HepG2 (cell line): ENCODE measurements at regions of chr20 and their contacts with region 1.

Region 1: GRCh38 chr20:40689943-40690835 is 1.2 kb upstream of the MAFB start:
- DNase-seq: peak; percentile 85
- ATAC-seq: peak; percentile 78
- H3K4me3 ChIP-seq: peak overlapping the region; percentile 41 to 75 (median 50)
- H3K27ac ChIP-seq: no peak overlapping the region
- H3K4me1 ChIP-seq: peaks cover 13% of the 10 kb centered on the region; the same call in 1 of the 2 replicates
- H3K27me3 ChIP-seq: peaks cover 11 to 50% of the 10 kb centered on the region in 2 experiments
- CTCF ChIP-seq: peak; percentile 98
- EP300 ChIP-seq: peak in 1 of 2 experiments; percentile 31; a peak in 1 of 4 replicates
- POLR2A ChIP-seq: no peak
- RAD21 ChIP-seq: peak; percentile 99

Region 2: GRCh38 chr20:39112178-39112743 is 1577.9 kb before region 1 on chr20:
- CTCF ChIA-PET with region 1: interaction called, 8 read pairs
- POLR2A ChIA-PET with region 1: no interaction called
- in situ Hi-C with region 1: loop called (anchors 10 kb)
- intact Hi-C with region 1: loop called (anchors 10 kb)
- DNase-seq: peak; percentile 65
- ATAC-seq: peak; percentile 97
- H3K4me3 ChIP-seq: peak overlapping the region in 1 of 3 experiments; percentile 6; a peak in 1 of 6 replicates
- H3K27ac ChIP-seq: no peak overlapping the region
- H3K4me1 ChIP-seq: peaks cover 15% of the 10 kb centered on the region; the same call in 1 of the 2 replicates
- H3K27me3 ChIP-seq: peaks cover 4 to 23% of the 10 kb centered on the region in 2 experiments; a peak in 3 of 5 replicates
- CTCF ChIP-seq: peak; percentile 96
- EP300 ChIP-seq: no peak
- POLR2A ChIP-seq: no peak
- RAD21 ChIP-seq: peak; percentile 90

Region 3: DNA sequence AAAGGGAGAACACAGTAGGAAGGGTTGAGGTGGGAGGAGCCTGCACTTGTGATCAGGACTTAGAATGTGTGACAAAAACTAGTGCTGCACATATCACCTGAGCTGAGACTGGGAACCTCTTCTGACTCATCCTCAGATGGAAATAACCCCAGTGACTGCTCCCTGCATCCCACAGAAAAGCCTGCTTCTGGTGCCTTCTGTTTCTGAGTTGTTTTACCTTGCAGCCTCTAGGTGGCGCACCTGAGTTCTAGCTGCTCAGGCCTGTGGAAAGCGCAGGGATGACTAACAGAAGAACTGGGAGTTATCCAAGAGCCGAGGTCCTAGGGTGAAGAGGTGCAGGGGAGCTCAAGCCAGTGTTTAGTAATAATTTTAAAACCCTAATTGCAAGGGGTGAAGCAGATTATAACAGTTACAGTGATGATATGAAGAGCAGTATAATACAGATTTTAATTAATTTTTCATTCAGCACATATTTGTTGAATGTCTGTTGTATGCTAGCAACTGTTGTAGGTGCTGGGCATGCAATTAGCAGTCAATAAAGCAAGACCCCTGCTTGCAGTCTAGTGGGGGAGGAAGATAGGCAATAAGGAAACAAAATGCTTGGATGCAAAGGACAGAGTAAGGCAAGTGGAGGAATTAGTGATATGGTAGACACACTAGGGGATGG is 1425.5 kb before region 1 on chr20:
- CTCF ChIA-PET with region 1: interaction called, 4 read pairs
- POLR2A ChIA-PET with region 1: no interaction called
- in situ Hi-C with region 1: no loop called
- intact Hi-C with region 1: loop called (anchors 10 kb)
- DNase-seq: peak; percentile 63
- ATAC-seq: peak; percentile 84
- H3K4me3 ChIP-seq: no peak overlapping the region
- H3K27ac ChIP-seq: no peak overlapping the region
- H3K4me1 ChIP-seq: no peaks in the 10 kb centered on the region
- H3K27me3 ChIP-seq: peaks cover 0 to 2% of the 10 kb centered on the region in 2 experiments; a peak in 1 of 5 replicates
- CTCF ChIP-seq: peak; percentile 87
- EP300 ChIP-seq: no peak
- POLR2A ChIP-seq: no peak
- RAD21 ChIP-seq: 0 out of 2 replicates have a peak, but pooled peaks have one; percentile 14

Region 4: GRCh38 chr20:39270837-39271604 is 1419.2 kb before region 1 on chr20:
- CTCF ChIA-PET with region 1: interaction called, 4 read pairs
- POLR2A ChIA-PET with region 1: no interaction called
- in situ Hi-C with region 1: loop called (anchors 10 kb)
- intact Hi-C with region 1: loop called (anchors 10 kb)
- DNase-seq: no peak
- ATAC-seq: no peak
- H3K4me3 ChIP-seq: no peak overlapping the region
- H3K27ac ChIP-seq: no peak overlapping the region
- H3K4me1 ChIP-seq: no peaks in the 10 kb centered on the region
- H3K27me3 ChIP-seq: peaks cover 0 to 9% of the 10 kb centered on the region in 2 experiments; a peak in 1 of 5 replicates
- CTCF ChIP-seq: no peak
- EP300 ChIP-seq: no peak
- POLR2A ChIP-seq: no peak
- RAD21 ChIP-seq: no peak

Region 5: DNA sequence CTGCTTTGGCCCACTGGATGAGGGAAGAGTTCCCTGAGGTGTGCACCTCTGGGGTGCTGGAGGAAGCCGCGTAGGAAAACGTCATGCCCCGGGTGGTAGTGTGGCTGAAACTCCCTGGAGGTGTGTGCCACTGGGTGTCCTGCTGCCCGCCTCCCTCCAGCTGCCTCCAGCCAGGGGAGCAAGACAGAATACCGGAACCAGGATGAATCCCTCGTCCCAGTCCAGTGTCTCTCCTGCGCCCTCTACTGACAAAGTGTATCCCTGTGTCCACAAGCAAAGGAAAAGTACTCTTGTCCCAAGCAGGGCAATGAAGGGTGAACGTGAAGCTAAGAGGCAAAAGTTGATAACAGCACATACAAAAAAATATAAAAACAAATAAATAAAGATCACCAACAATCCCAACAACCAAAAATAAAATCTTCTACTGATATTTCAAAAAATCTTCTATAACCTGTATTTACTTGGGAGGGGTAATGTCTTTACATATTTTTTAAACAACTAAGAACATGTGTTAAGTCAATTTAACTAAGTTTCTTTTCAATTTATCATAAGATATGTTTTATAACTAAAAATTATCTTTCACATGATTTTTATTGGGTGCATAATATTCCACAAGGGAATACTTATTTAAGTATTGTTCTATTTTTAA is 438.8 kb before region 1 on chr20:
- CTCF ChIA-PET with region 1: no interaction called
- POLR2A ChIA-PET with region 1: no interaction called
- in situ Hi-C with region 1: no loop called
- intact Hi-C with region 1: loop called (anchors 1 kb)
- DNase-seq: peak; percentile 70
- ATAC-seq: peak; percentile 96
- H3K4me3 ChIP-seq: no peak overlapping the region
- H3K27ac ChIP-seq: no peak overlapping the region
- H3K4me1 ChIP-seq: no peaks in the 10 kb centered on the region
- H3K27me3 ChIP-seq: no peaks in the 10 kb centered on the region
- CTCF ChIP-seq: peak; percentile 87
- EP300 ChIP-seq: no peak
- POLR2A ChIP-seq: no peak
- RAD21 ChIP-seq: peak; percentile 49

Region 6: GRCh38 chr20:40265825-40266533 is 424.2 kb before region 1 on chr20:
- CTCF ChIA-PET with region 1: interaction called, 22 read pairs
- POLR2A ChIA-PET with region 1: no interaction called
- in situ Hi-C with region 1: loop called (anchors 5 kb)
- intact Hi-C with region 1: loop called (anchors 1 kb)
- DNase-seq: peak; percentile 35
- ATAC-seq: peak; percentile 85
- H3K4me3 ChIP-seq: no peak overlapping the region
- H3K27ac ChIP-seq: no peak overlapping the region
- H3K4me1 ChIP-seq: no peaks in the 10 kb centered on the region
- H3K27me3 ChIP-seq: no peaks in the 10 kb centered on the region
- CTCF ChIP-seq: peak; percentile 56
- EP300 ChIP-seq: no peak
- POLR2A ChIP-seq: no peak
- RAD21 ChIP-seq: no peak; the same call in 1 of the 2 replicates

Region 7: DNA sequence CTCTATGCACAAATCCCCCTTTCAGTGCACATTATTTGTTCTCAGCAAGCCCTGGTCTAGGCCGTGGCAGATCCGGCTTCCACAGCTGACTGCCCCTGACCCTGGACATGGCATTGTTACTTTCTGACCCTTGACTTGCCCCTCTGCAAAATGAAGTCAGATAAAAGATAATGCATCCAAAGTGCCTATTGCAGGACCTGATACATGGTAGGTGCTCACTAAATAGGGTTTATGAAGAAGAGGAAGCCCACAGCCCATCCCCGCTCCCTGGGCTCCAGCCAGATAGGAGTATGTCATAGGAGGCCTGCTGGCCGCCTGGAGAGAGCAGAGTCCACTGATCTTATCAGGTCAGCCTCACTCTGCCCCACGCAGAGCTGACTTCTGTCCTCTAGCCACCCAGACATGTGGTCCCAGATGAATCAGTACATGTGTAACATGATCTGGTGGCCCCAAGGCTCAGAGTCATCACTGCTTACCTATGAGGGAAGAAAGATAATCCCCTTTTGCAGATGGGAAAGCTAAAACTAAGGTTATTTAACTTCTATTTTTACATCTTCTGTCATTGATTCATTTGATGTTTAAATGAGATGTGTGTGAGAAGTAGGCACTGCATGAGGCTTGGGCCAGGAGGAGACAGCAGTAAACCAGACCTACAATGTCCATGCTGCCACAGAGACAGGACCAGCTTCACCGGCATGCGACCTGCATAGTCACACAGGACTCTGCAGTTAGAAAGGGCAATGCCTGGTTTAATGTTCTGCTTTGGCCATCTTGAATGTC is 21.6 kb before region 1 on chr20:
- CTCF ChIA-PET with region 1: no interaction called
- POLR2A ChIA-PET with region 1: interaction called, 12 read pairs
- in situ Hi-C with region 1: no loop called
- intact Hi-C with region 1: loop called (anchors 1 kb)
- DNase-seq: peak; percentile 96
- ATAC-seq: peak; percentile 99
- H3K4me3 ChIP-seq: peak overlapping the region in 1 of 3 experiments; percentile 21; a peak in 2 of 6 replicates
- H3K27ac ChIP-seq: peak overlapping the region; percentile 15
- H3K4me1 ChIP-seq: peaks cover 28% of the 10 kb centered on the region
- H3K27me3 ChIP-seq: no peaks in the 10 kb centered on the region
- CTCF ChIP-seq: peak; percentile 23; the same call in 1 of the 2 replicates
- EP300 ChIP-seq: peak; percentile 68 to 79
- POLR2A ChIP-seq: no peak
- RAD21 ChIP-seq: no peak; the same call in 1 of the 2 replicates